Naive thymus-derived CD4-positive, alpha-beta T cell (primary cell): ENCODE measurements at regions of chr5 and their contacts with region 1.

Region 1: GRCh38 chr5:53481887-53482716 is 1.7 kb downstream of the FST start:
- DNase-seq: peak; percentile 34 to 73 (median 50)
- ATAC-seq: peak; percentile 78
- H3K4me3 ChIP-seq: peak overlapping the region; percentile 67
- H3K4me3 Mint-ChIP-seq: peak overlapping the region; percentile 86 to 99 (median 90)
- H3K27ac ChIP-seq: no peak overlapping the region
- H3K27ac Mint-ChIP-seq: peak overlapping the region; percentile 25 to 93 (median 74)
- H3K4me1 ChIP-seq: peaks cover 10 to 11% of the 10 kb centered on the region in 2 donors
- H3K4me1 Mint-ChIP-seq: peaks cover 34 to 46% (median 42%) of the 10 kb centered on the region in 7 donors
- H3K27me3 ChIP-seq: peaks cover 0 to 13% of the 10 kb centered on the region in 2 donors
- H3K27me3 Mint-ChIP-seq: peaks cover 48 to 80% (median 61%) of the 10 kb centered on the region in 5 donors

Region 2: GRCh38 chr5:52424401-52424800 is 1057.7 kb before region 1 on chr5:
- CTCF ChIA-PET with region 1: no interaction called
- POLR2A ChIA-PET with region 1: no interaction called
- intact Hi-C with region 1: no loop called
- DNase-seq: no peak
- ATAC-seq: no peak
- H3K4me3 ChIP-seq: no peak overlapping the region
- H3K4me3 Mint-ChIP-seq: no peak overlapping the region
- H3K27ac ChIP-seq: no peak overlapping the region
- H3K27ac Mint-ChIP-seq: no peak overlapping the region
- H3K4me1 ChIP-seq: no peaks in the 10 kb centered on the region
- H3K4me1 Mint-ChIP-seq: no peaks in the 10 kb centered on the region
- H3K27me3 ChIP-seq: no peaks in the 10 kb centered on the region
- H3K27me3 Mint-ChIP-seq: no peaks in the 10 kb centered on the region

Region 3: GRCh38 chr5:53109443-53110127 is 372.5 kb before region 1 on chr5 and contains the start of gene MOCS2:
- CTCF ChIA-PET with region 1: no interaction called
- POLR2A ChIA-PET with region 1: no interaction called
- intact Hi-C with region 1: loop called (anchors 5 kb)
- DNase-seq: peak; percentile 87 to 93 (median 91)
- ATAC-seq: peak; percentile 98
- H3K4me3 ChIP-seq: peak within 1 kb of the TSS; percentile 88
- H3K4me3 Mint-ChIP-seq: peak within 1 kb of the TSS; percentile 93 to 99 (median 96)
- H3K27ac ChIP-seq: peak within 1 kb of the TSS; percentile 84
- H3K27ac Mint-ChIP-seq: peak within 1 kb of the TSS; percentile 86 to 98 (median 93)
- H3K4me1 ChIP-seq: peaks cover 6 to 7% of the 10 kb centered on the region in 2 donors
- H3K4me1 Mint-ChIP-seq: peaks cover 29 to 64% (median 60%) of the 10 kb centered on the region in 7 donors
- H3K27me3 ChIP-seq: no peaks in the 10 kb centered on the region
- H3K27me3 Mint-ChIP-seq: no peaks in the 10 kb centered on the region
- total RNA-seq, gene MOCS2: 12.8 to 29.8 (median 20.9) TPM

Region 4: DNA sequence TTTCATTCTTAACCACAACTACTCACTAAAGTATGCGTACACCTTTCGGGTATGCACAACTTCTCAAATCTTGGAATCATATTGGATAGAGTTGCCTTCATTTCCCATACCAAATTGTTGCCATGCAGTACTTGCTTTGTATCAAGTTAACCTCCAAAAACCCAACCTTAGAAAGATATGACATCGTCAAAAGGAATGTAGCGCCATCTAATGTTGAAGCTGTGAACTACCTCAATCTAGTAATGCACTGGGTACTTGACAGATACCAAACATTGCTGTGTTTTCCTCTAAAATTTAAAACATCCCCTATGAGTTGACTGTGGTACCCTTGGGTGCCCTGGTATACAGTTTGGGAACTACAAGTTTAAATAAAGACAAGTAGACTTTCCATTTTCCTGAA is 509.8 kb after region 1 on chr5:
- CTCF ChIA-PET with region 1: no interaction called
- POLR2A ChIA-PET with region 1: no interaction called
- intact Hi-C with region 1: loop called in 1 of 2 experiments (anchors 2 kb)
- DNase-seq: no peak
- ATAC-seq: no peak
- H3K4me3 ChIP-seq: no peak overlapping the region
- H3K4me3 Mint-ChIP-seq: no peak overlapping the region
- H3K27ac ChIP-seq: no peak overlapping the region
- H3K27ac Mint-ChIP-seq: peak overlapping the region in 1 of 9 donors; percentile 10
- H3K4me1 ChIP-seq: no peaks in the 10 kb centered on the region
- H3K4me1 Mint-ChIP-seq: peaks cover 0 to 10% (median 0%) of the 10 kb centered on the region in 7 donors
- H3K27me3 ChIP-seq: no peaks in the 10 kb centered on the region
- H3K27me3 Mint-ChIP-seq: no peaks in the 10 kb centered on the region

Region 5: DNA sequence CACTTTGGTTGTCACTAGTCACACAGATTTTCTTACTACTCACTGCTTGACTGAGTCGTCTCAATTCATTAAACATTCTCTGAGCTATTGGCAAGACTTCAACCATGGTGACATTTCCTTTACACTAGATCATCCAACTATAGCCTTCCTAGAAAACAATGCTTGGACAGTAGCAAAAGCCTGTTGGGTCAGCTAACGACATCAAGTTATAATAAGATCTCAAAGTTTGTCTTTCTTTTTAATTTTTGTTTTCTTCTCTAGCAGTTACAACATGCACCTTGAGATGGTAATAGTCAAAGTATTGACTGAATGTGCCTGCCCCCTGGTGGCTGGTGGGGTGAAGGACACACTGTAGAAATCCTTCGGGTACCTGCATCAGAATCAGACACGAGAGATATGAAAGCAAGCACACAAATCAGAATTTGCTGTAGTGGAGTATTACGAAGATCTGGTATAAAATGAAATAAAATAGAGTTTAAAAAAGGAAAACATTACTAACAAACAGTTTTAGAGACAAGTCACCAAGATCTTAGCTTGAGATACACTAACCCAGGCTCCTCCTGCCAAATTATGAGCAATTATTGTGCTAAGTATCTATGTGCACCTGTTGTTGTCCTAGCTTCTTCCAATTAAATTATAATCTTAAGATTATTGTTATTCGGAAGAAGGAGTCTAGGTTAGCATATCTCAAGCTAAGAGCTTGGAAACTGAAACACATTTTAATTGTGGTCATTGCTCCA is 747.1 kb after region 1 on chr5:
- CTCF ChIA-PET with region 1: interaction called, 4 read pairs
- POLR2A ChIA-PET with region 1: no interaction called
- intact Hi-C with region 1: loop called in 1 of 2 experiments (anchors 1 kb)
- DNase-seq: peak; percentile 32 to 70 (median 62)
- ATAC-seq: peak; percentile 89
- H3K4me3 ChIP-seq: no peak overlapping the region
- H3K4me3 Mint-ChIP-seq: peak overlapping the region in 1 of 10 donors; percentile 14
- H3K27ac ChIP-seq: no peak overlapping the region
- H3K27ac Mint-ChIP-seq: peak overlapping the region in 1 of 9 donors; percentile 10
- H3K4me1 ChIP-seq: peaks cover 0 to 4% of the 10 kb centered on the region in 2 donors
- H3K4me1 Mint-ChIP-seq: peaks cover 3 to 39% (median 18%) of the 10 kb centered on the region in 7 donors
- H3K27me3 ChIP-seq: no peaks in the 10 kb centered on the region
- H3K27me3 Mint-ChIP-seq: peaks cover 0 to 8% (median 0%) of the 10 kb centered on the region in 5 donors

Region 6: GRCh38 chr5:54480296-54480695 is 998.2 kb after region 1 on chr5:
- CTCF ChIA-PET with region 1: no interaction called
- POLR2A ChIA-PET with region 1: no interaction called
- intact Hi-C with region 1: loop called in 1 of 2 experiments (anchors 5 kb)
- DNase-seq: no peak
- ATAC-seq: peak; percentile 27
- H3K4me3 ChIP-seq: no peak overlapping the region
- H3K4me3 Mint-ChIP-seq: no peak overlapping the region
- H3K27ac ChIP-seq: no peak overlapping the region
- H3K27ac Mint-ChIP-seq: no peak overlapping the region
- H3K4me1 ChIP-seq: no peaks in the 10 kb centered on the region
- H3K4me1 Mint-ChIP-seq: peaks cover 0 to 3% (median 0%) of the 10 kb centered on the region in 7 donors
- H3K27me3 ChIP-seq: no peaks in the 10 kb centered on the region
- H3K27me3 Mint-ChIP-seq: peaks cover 5 to 19% (median 14%) of the 10 kb centered on the region in 5 donors

Region 7: DNA sequence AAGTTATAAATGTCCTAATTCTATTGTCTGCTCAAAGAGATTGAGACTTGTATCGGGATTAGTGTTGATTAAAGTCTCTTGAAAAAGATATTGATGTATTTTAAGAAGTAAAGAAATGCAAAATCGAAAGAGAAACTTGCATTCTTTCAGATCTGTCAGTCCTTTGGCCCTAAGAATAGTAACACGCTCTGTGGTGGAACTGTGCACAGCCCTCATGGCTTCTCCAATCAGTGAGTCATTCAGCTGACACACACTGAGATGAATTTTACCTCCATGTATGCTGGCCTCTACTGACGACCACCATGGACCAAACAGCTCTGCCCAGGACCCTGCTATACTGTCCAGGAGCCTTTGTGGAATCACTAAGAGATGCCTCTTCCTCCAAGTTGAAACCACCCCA is 1270.9 kb after region 1 on chr5:
- CTCF ChIA-PET with region 1: no interaction called
- POLR2A ChIA-PET with region 1: no interaction called
- intact Hi-C with region 1: no loop called
- DNase-seq: no peak
- ATAC-seq: peak; percentile 75
- H3K4me3 ChIP-seq: no peak overlapping the region
- H3K4me3 Mint-ChIP-seq: peak overlapping the region in 1 of 10 donors; percentile 72
- H3K27ac ChIP-seq: no peak overlapping the region
- H3K27ac Mint-ChIP-seq: peak overlapping the region in 2 of 9 donors; percentile 16 to 83
- H3K4me1 ChIP-seq: peaks cover 14 to 15% of the 10 kb centered on the region in 2 donors
- H3K4me1 Mint-ChIP-seq: peaks cover 17 to 44% (median 18%) of the 10 kb centered on the region in 7 donors
- H3K27me3 ChIP-seq: no peaks in the 10 kb centered on the region
- H3K27me3 Mint-ChIP-seq: no peaks in the 10 kb centered on the region